ENCODE measurements at regions of chr2 and their contacts with region 1.

Region 1: DNA sequence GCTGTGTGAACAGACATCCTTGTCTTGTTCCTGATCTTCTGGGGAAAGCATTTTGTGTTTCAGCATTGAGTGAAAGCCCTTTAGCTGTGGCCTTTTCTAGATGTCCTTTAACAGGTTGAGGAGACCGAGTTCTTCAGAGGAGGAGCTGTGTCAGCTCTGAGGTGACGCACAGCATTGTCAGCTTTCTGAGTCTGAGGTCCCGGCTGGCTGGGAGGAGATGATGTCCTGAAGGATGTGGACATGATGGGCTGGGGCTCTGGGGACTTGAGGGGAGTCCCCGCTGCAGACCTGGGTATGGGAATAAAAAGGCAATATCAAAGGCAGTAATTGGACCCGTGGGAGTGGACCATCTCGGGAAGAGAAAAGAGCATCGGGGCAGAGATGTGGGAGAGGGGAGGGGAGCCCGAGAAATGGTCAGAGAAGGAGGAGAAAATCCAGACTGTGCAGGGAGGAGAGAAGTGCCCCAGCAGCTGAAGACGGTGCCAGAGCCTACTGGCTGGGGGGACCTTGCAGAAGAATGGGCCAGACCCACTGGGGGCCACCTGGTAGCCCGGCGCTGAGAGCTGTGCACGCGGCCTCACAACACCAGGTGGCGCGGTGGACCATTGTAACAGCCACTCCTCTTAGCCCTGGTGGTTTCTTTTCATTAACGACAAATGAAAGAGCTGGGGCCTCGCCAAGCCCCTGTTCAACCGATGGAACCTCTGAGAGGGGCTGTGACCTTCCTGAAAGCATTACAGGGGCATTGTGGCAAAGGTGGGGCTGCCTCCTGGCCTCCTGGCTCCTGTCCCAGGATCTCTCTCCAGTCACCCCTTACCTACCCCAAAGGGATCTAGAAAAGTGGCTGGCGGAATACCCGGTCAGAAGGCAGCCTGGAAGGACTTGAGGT is 61.6 kb downstream of the ST3GAL5 start:
- DNase-seq: peak; percentile 84
- H3K4me3 ChIP-seq: no peak overlapping the region
- H3K27ac ChIP-seq: no peak overlapping the region
- H3K4me1 ChIP-seq: peaks cover 7% of the 10 kb centered on the region
- H3K27me3 ChIP-seq: no peaks in the 10 kb centered on the region
- CTCF ChIP-seq: peak; percentile 95

Region 2: DNA sequence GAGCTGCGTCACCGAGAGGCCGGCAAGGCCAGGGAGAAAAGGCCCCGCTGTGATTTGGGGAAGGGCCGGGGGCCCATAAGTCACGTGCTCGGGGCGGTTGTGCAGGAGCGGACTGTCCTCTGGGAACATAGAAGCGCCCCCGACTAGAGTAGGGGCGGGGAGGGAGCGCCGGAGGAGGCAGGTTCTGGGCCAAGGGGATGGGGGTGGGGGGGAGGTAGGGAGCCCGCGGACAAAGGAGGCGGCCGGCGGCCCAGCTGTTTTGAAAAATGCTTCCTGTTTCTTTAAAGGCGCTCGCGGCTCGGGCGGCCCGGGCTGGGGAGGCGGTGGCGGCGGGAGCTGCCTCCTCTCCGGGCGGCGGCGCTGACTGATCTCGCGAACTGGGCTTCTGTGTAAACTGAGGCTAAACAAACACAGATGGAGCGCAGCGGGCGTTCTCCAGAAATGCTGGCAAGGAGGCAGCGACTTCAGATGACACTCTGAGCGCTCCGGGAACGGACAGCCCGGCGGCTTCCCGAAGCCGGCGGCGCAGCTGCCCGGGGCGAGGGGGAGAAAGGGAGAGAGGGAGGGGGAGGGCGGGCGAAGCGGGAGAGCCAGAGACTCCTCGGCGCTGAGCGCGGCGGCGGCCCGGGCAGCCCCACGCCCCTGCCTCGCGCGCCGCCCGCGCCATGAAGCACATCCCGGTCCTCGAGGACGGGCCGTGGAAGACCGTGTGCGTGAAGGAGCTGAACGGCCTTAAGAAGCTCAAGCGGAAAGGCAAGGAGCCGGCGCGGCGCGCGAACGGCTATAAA is 73.5 kb before region 1 on chr2 and contains the start of gene ATOH8:
- CTCF ChIA-PET with region 1: no interaction called
- POLR2A ChIA-PET with region 1: no interaction called
- intact Hi-C with region 1: no loop called
- DNase-seq: peak; percentile 72
- H3K4me3 ChIP-seq: peak within 1 kb of the TSS; percentile 66
- H3K27ac ChIP-seq: peak within 1 kb of the TSS; percentile 39
- H3K4me1 ChIP-seq: peaks cover 35% of the 10 kb centered on the region
- H3K27me3 ChIP-seq: no peaks in the 10 kb centered on the region
- CTCF ChIP-seq: no peak
- total RNA-seq, gene ATOH8: 4.3 and 4.6 TPM in 2 replicates

Region 3: GRCh38 chr2:85813982-85814801 is 13.0 kb before region 1 on chr2:
- CTCF ChIA-PET with region 1: interaction called, 10 read pairs
- POLR2A ChIA-PET with region 1: no interaction called
- intact Hi-C with region 1: no loop called
- DNase-seq: peak; percentile 88
- H3K4me3 ChIP-seq: no peak overlapping the region
- H3K27ac ChIP-seq: no peak overlapping the region
- H3K4me1 ChIP-seq: no peaks in the 10 kb centered on the region
- H3K27me3 ChIP-seq: no peaks in the 10 kb centered on the region
- CTCF ChIP-seq: peak; percentile 94

Region 4: GRCh38 chr2:86020984-86021383 is 193.8 kb after region 1 on chr2:
- CTCF ChIA-PET with region 1: no interaction called
- POLR2A ChIA-PET with region 1: no interaction called
- intact Hi-C with region 1: loop called (anchors 5 kb)
- DNase-seq: no peak
- H3K4me3 ChIP-seq: no peak overlapping the region
- H3K27ac ChIP-seq: no peak overlapping the region
- H3K4me1 ChIP-seq: no peaks in the 10 kb centered on the region
- H3K27me3 ChIP-seq: no peaks in the 10 kb centered on the region
- CTCF ChIP-seq: no peak

Region 5: GRCh38 chr2:86079981-86080911 is 253.0 kb after region 1 on chr2:
- CTCF ChIA-PET with region 1: interaction called, 41 read pairs
- POLR2A ChIA-PET with region 1: no interaction called
- intact Hi-C with region 1: loop called (anchors 1 kb)
- DNase-seq: peak; percentile 78
- H3K4me3 ChIP-seq: no peak overlapping the region
- H3K27ac ChIP-seq: no peak overlapping the region
- H3K4me1 ChIP-seq: no peaks in the 10 kb centered on the region
- H3K27me3 ChIP-seq: no peaks in the 10 kb centered on the region
- CTCF ChIP-seq: peak; percentile 92

Region 6: DNA sequence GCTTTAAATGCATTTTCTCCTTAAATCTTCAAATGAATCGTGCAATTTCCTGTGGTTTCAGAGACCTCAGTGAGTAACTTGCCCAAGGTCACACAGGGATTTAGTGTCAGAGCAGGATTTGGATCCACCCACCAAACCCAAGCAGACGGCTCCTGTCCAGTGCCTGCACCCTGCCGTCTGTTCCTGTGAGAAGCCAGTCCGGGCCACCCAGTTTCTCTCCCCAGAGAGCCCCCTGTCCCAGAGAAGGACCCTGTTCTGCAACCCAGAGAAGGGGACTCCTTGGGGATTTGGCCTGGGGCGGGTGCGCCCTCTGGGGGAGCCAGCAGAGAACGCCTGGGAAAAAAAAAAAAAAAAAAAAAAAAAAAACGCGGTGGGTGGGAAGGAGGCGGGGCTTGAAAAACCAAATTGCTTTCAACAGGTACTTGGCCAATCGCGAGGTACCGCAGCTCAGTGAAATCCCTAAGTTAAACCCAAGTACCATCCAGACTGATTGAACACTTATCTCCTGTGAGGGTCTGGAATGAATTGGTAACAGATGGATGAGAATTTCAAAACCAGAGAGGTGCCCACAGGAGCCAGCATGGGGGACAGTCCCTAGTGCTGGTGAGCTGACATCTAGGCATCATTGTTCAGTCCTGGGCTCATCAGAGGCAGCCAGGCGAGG is 541.1 kb after region 1 on chr2:
- CTCF ChIA-PET with region 1: no interaction called
- POLR2A ChIA-PET with region 1: no interaction called
- intact Hi-C with region 1: loop called (anchors 5 kb)
- DNase-seq: peak; percentile 72
- H3K4me3 ChIP-seq: no peak overlapping the region
- H3K27ac ChIP-seq: no peak overlapping the region
- H3K4me1 ChIP-seq: peaks cover 5% of the 10 kb centered on the region
- H3K27me3 ChIP-seq: no peaks in the 10 kb centered on the region
- CTCF ChIP-seq: peak; percentile 86